ENCODE measurements at regions of chr10 and their contacts with region 1.

Region 1: GRCh38 chr10:21694631-21695030 is 160.6 kb downstream of the MLLT10 start:
- DNase-seq: no peak
- ATAC-seq: no peak
- H3K4me3 Mint-ChIP-seq: no peak overlapping the region
- H3K27ac Mint-ChIP-seq: peak overlapping the region; percentile 51; the same call in 1 of the 2 replicates
- H3K4me1 Mint-ChIP-seq: peaks cover 17% of the 10 kb centered on the region
- H3K27me3 Mint-ChIP-seq: no peaks in the 10 kb centered on the region
- CTCF ChIP-seq: no peak

Region 2: GRCh38 chr10:21327289-21327993 is 367.2 kb before region 1 on chr10:
- CTCF ChIA-PET with region 1: no interaction called
- POLR2A ChIA-PET with region 1: interaction called, 10 read pairs
- DNase-seq: no peak
- ATAC-seq: peak; percentile 72
- H3K4me3 Mint-ChIP-seq: no peak overlapping the region
- H3K27ac Mint-ChIP-seq: peak overlapping the region; percentile 46
- H3K4me1 Mint-ChIP-seq: peaks cover 15% of the 10 kb centered on the region
- H3K27me3 Mint-ChIP-seq: no peaks in the 10 kb centered on the region
- CTCF ChIP-seq: no peak

Region 3: GRCh38 chr10:21617267-21617666 is 77.4 kb before region 1 on chr10:
- CTCF ChIA-PET with region 1: no interaction called
- POLR2A ChIA-PET with region 1: interaction called, 12 read pairs
- DNase-seq: no peak
- ATAC-seq: no peak
- H3K4me3 Mint-ChIP-seq: no peak overlapping the region
- H3K27ac Mint-ChIP-seq: no peak overlapping the region
- H3K4me1 Mint-ChIP-seq: peaks cover 11% of the 10 kb centered on the region
- H3K27me3 Mint-ChIP-seq: no peaks in the 10 kb centered on the region
- CTCF ChIP-seq: no peak

Region 4: DNA sequence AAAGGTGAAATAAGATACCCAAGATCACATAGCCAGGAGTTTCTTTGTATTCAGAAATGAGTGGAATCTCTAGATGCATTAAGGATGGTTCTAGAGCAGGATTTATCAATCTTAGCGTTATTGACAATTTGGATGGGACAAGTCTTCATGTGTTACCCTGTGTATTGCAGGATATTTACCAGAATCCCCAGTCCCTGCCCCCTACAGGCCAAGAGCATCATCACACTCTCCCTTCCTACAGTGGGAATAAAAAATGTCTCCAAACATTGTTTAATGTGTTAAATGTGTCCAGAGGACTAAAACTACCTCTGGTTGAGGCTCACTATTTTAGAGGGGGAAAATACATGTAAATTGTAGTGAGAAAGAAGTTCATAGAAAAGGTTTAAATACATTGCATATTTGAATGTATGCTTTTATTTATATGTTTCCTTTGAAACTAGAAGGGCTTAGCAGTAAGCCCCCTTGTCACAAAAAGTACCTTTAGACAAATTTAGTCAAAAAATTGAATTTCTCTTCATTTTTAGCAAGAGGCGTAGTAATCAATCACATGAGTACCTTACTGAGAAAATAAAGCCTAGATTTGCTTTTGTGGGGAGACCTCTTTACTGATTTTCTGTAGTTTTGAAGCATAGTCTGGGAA is 19.4 kb before region 1 on chr10:
- CTCF ChIA-PET with region 1: no interaction called
- POLR2A ChIA-PET with region 1: no interaction called
- DNase-seq: peak; percentile 62
- ATAC-seq: peak; percentile 83
- H3K4me3 Mint-ChIP-seq: no peak overlapping the region
- H3K27ac Mint-ChIP-seq: peak overlapping the region; percentile 74; the same call in 1 of the 2 replicates
- H3K4me1 Mint-ChIP-seq: peaks cover 6% of the 10 kb centered on the region; the same call in 1 of the 2 replicates
- H3K27me3 Mint-ChIP-seq: no peaks in the 10 kb centered on the region
- CTCF ChIP-seq: peak; percentile 84

Region 5: DNA sequence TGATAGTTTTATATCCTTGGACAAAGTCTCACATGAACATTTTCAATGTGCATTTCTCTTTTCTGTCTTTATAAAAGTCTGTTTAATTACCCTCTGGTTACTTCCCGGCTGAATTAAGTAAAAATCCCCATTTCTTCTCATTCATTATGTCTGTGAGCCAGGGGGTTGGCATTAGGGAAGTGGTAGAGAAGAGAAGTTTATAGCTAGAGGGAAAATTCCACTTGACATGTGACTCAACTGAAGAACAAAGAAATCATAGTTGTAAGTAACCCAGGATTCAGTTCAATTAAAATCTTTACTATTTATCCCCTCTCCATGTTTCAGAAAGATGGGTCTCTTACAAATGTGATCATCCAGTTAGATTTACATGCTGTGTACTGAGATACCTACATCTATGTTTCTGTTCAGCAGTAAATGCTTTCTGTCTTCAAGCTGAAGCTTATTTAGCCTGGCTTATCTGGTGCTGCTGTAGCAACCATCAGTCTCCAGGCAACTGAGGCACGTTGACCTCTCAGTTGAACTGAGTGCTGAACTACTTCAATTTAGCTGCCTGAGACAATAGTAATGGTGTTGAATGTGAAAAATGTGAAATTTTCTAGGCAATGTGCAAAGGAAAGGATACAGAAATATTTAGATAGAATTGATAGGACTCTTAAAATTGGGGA is 21.0 kb after region 1 on chr10:
- CTCF ChIA-PET with region 1: no interaction called
- POLR2A ChIA-PET with region 1: no interaction called
- DNase-seq: no peak
- ATAC-seq: no peak
- H3K4me3 Mint-ChIP-seq: no peak overlapping the region
- H3K27ac Mint-ChIP-seq: peak overlapping the region; percentile 22; the same call in 1 of the 2 replicates
- H3K4me1 Mint-ChIP-seq: peaks cover 18% of the 10 kb centered on the region
- H3K27me3 Mint-ChIP-seq: no peaks in the 10 kb centered on the region
- CTCF ChIP-seq: no peak

Measured in WTC11 (cell line).